IMR-90 (cell line): ENCODE measurements at regions of chr15 and their contacts with region 1.

Region 1: GRCh38 chr15:74768771-74769342 is 13.0 kb upstream of the CSK start:
- DNase-seq: peak; percentile 41
- ATAC-seq: peak; percentile 83
- H3K4me3 ChIP-seq: no peak overlapping the region
- H3K27ac ChIP-seq: no peak overlapping the region
- H3K4me1 ChIP-seq: no peaks in the 10 kb centered on the region
- H3K27me3 ChIP-seq: peaks cover 13% of the 10 kb centered on the region; the same call in 1 of the 2 replicates
- CTCF ChIP-seq: peak; percentile 75
- POLR2A ChIP-seq: no peak
- RAD21 ChIP-seq: peak; percentile 83

Region 2: DNA sequence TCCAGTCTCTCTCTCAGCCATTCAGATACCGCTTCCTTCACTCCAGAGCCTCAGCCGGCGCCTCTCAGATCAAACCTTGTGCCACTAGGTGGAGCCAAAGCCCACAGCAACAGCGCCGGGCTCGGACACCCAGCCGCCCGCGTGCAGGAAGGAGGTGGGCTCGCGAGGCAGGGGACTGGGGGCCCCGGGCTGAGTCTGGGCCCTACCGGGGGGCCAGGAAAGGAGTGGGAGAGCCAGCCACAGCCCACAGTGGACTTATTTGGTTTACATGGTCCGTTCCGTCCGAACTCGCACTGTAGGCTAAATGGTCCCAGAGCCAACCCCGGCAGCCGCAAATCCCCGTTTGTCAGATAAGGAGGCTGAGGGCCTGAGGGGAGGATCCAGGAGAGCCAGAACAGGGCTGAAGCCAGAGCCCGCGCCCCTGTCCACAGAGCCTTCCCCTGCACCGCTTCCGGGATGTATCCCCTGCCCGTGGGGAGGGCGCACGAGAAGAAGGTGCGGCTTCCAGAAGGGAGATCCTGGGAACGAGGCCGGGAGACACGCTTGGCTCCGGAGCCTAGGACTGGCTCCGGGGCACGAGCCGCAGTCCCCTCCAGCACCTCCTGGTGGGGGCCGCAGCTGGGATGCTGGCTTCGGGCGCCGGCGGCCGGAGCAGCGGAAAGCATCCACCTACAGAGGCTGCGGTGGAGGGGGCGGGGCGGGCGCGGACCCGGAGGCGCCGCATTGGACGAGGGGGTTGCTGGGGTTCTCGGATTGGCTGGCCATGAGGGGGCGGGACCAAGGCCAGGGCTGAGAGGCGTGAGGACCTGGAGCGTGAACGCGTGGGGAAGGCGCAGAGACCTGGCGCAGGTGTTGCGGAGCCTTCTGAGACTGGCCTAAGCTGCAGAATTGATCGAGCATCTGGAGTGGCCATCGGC is 394.9 kb before region 1 on chr15:
- CTCF ChIA-PET with region 1: interaction called, 7 read pairs
- POLR2A ChIA-PET with region 1: no interaction called
- dilution Hi-C with region 1: no loop called
- in situ Hi-C with region 1: loop called (anchors 10 kb)
- intact Hi-C with region 1: loop called (anchors 2 kb)
- DNase-seq: peak; percentile 72
- ATAC-seq: peak; percentile 95
- H3K4me3 ChIP-seq: peak overlapping the region; percentile 78
- H3K27ac ChIP-seq: no peak overlapping the region; the same call in 1 of the 2 replicates
- H3K4me1 ChIP-seq: peaks cover 4% of the 10 kb centered on the region; the same call in 1 of the 2 replicates
- H3K27me3 ChIP-seq: peaks cover 31% of the 10 kb centered on the region
- CTCF ChIP-seq: peak; percentile 92
- POLR2A ChIP-seq: peak; percentile 30; the same call in 1 of the 2 replicates
- RAD21 ChIP-seq: peak; percentile 93

Region 3: DNA sequence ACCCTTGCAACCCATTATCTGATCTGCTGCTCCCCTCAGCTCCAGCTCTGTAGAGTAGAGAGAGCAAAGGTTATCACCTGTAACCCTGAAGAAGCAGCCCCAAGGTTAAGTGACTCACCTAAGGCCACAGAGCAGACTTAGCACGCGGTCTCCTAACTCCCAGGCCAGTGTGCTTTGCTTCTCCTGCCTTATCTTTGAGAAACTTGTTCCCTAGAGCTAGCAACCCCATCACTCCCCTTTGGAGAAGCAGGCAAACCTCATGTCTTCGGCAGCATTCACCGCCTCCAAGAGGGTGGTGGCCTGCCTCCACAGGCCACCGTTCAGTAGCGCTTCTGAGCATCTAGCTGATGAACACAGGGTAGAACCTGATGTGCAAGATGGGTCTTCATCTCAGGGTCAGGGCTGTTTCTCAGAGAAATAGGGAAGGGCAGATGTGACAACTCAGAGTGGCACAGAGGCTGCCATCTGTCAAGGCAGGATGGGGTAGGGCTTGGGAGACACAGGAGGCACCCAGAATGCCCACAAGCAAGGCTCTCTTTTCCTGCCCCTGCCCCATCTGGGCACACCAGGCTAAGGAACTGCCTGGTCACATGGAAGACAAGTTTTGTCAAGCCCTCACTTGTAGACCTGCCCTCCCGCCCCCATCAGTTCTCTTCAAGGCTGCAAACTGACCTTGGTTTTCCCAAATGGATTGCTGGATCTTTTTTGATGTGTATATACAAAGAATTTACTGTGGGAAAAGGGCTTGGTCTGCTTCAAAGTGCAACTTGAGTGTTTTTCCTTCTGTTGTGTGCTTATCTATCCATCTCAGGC is 188.1 kb before region 1 on chr15:
- CTCF ChIA-PET with region 1: no interaction called
- POLR2A ChIA-PET with region 1: no interaction called
- dilution Hi-C with region 1: no loop called
- in situ Hi-C with region 1: no loop called
- intact Hi-C with region 1: no loop called
- DNase-seq: no peak
- ATAC-seq: no peak
- H3K4me3 ChIP-seq: no peak overlapping the region
- H3K27ac ChIP-seq: no peak overlapping the region
- H3K4me1 ChIP-seq: no peaks in the 10 kb centered on the region
- H3K27me3 ChIP-seq: no peaks in the 10 kb centered on the region
- CTCF ChIP-seq: no peak
- POLR2A ChIP-seq: no peak
- RAD21 ChIP-seq: no peak

Region 4: DNA sequence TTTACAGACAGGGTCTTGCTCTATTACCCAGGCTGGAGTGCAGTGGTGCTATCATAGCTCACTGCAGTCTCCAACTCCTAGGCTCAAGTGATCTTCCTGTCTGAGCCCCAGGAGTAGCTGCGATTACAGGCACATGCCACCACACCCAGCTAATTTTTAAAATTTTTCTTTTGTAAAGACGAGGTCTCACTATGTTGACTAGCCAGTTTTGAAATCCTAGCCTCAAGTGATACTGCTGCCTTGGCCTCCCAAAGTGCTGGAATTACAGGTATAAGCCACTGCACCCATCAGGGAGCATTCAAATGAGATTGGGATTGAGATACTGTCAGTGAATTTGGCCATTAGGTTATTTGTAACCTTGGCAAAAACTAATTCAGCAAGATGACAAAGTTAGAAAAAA is 94.7 kb before region 1 on chr15:
- CTCF ChIA-PET with region 1: no interaction called
- POLR2A ChIA-PET with region 1: no interaction called
- dilution Hi-C with region 1: no loop called
- in situ Hi-C with region 1: no loop called
- intact Hi-C with region 1: no loop called
- DNase-seq: no peak
- ATAC-seq: no peak
- H3K4me3 ChIP-seq: no peak overlapping the region
- H3K27ac ChIP-seq: no peak overlapping the region
- H3K4me1 ChIP-seq: no peaks in the 10 kb centered on the region
- H3K27me3 ChIP-seq: no peaks in the 10 kb centered on the region
- CTCF ChIP-seq: no peak
- POLR2A ChIP-seq: no peak
- RAD21 ChIP-seq: no peak

Region 5: GRCh38 chr15:74732846-74733245 is 36.0 kb before region 1 on chr15:
- CTCF ChIA-PET with region 1: no interaction called
- POLR2A ChIA-PET with region 1: no interaction called
- dilution Hi-C with region 1: no loop called
- in situ Hi-C with region 1: no loop called
- intact Hi-C with region 1: no loop called
- DNase-seq: no peak
- ATAC-seq: no peak
- H3K4me3 ChIP-seq: no peak overlapping the region
- H3K27ac ChIP-seq: no peak overlapping the region
- H3K4me1 ChIP-seq: no peaks in the 10 kb centered on the region
- H3K27me3 ChIP-seq: peaks cover 60% of the 10 kb centered on the region
- CTCF ChIP-seq: no peak
- POLR2A ChIP-seq: no peak
- RAD21 ChIP-seq: no peak

Region 6: GRCh38 chr15:74799856-74800547 is 31.1 kb after region 1 on chr15:
- CTCF ChIA-PET with region 1: interaction called, 4 read pairs
- POLR2A ChIA-PET with region 1: no interaction called
- dilution Hi-C with region 1: no loop called
- in situ Hi-C with region 1: no loop called
- intact Hi-C with region 1: loop called (anchors 1 kb)
- DNase-seq: peak; percentile 52
- ATAC-seq: peak; percentile 99
- H3K4me3 ChIP-seq: no peak overlapping the region
- H3K27ac ChIP-seq: no peak overlapping the region
- H3K4me1 ChIP-seq: peaks cover 2% of the 10 kb centered on the region; the same call in 1 of the 2 replicates
- H3K27me3 ChIP-seq: no peaks in the 10 kb centered on the region
- CTCF ChIP-seq: peak; percentile 93
- POLR2A ChIP-seq: 0 out of 2 replicates have a peak, but pooled peaks have one; percentile 28
- RAD21 ChIP-seq: peak; percentile 89

Region 7: GRCh38 chr15:74869726-74870407 is 101.0 kb after region 1 on chr15:
- CTCF ChIA-PET with region 1: interaction called, 10 read pairs
- POLR2A ChIA-PET with region 1: no interaction called
- dilution Hi-C with region 1: no loop called
- in situ Hi-C with region 1: no loop called
- intact Hi-C with region 1: no loop called
- DNase-seq: peak; percentile 39
- ATAC-seq: no peak
- H3K4me3 ChIP-seq: no peak overlapping the region
- H3K27ac ChIP-seq: no peak overlapping the region
- H3K4me1 ChIP-seq: peaks cover 18% of the 10 kb centered on the region
- H3K27me3 ChIP-seq: no peaks in the 10 kb centered on the region
- CTCF ChIP-seq: no peak
- POLR2A ChIP-seq: no peak
- RAD21 ChIP-seq: no peak

Region 8: GRCh38 chr15:74950078-74951000 is 181.5 kb after region 1 on chr15:
- CTCF ChIA-PET with region 1: interaction called, 9 read pairs
- POLR2A ChIA-PET with region 1: no interaction called
- dilution Hi-C with region 1: no loop called
- in situ Hi-C with region 1: loop called (anchors 5 kb)
- intact Hi-C with region 1: loop called (anchors 1 kb)
- DNase-seq: peak; percentile 67
- ATAC-seq: peak; percentile 70
- H3K4me3 ChIP-seq: no peak overlapping the region
- H3K27ac ChIP-seq: no peak overlapping the region
- H3K4me1 ChIP-seq: peaks cover 5% of the 10 kb centered on the region; the same call in 1 of the 2 replicates
- H3K27me3 ChIP-seq: peaks cover 3% of the 10 kb centered on the region
- CTCF ChIP-seq: peak; percentile 97
- POLR2A ChIP-seq: no peak; the same call in 1 of the 2 replicates
- RAD21 ChIP-seq: peak; percentile 94